ENCODE measurements at regions of chr5 and their contacts with region 1.

Region 1: GRCh38 chr5:139273572-139274289 is 19.8 kb upstream of the MATR3 start:
- DNase-seq: peak; percentile 99
- H3K27ac ChIP-seq: peak overlapping the region; percentile 72
- CTCF ChIP-seq: no peak

Region 2: DNA sequence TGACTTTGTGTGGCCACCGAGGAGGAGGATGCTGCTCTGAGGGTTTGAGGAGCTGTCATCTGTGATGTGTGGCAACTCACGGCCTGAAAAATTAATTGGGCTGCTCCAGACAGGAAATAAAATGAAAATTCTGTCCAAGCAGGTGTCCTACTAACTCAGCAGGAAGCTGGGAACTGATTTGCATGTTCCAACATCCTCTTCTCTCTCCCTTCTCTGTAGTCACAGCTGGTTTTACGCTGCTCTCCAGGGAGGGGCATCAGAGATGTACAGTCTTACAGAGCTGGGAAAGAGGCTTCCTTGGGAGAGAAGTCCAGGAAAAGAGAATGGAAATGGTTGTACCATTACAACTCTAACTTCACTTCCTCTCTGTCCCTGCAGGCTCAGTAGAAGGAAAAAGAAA is 51.4 kb before region 1 on chr5:
- CTCF ChIA-PET with region 1: no interaction called
- POLR2A ChIA-PET with region 1: no interaction called
- DNase-seq: no peak
- H3K27ac ChIP-seq: no peak overlapping the region
- CTCF ChIP-seq: no peak

Region 3: DNA sequence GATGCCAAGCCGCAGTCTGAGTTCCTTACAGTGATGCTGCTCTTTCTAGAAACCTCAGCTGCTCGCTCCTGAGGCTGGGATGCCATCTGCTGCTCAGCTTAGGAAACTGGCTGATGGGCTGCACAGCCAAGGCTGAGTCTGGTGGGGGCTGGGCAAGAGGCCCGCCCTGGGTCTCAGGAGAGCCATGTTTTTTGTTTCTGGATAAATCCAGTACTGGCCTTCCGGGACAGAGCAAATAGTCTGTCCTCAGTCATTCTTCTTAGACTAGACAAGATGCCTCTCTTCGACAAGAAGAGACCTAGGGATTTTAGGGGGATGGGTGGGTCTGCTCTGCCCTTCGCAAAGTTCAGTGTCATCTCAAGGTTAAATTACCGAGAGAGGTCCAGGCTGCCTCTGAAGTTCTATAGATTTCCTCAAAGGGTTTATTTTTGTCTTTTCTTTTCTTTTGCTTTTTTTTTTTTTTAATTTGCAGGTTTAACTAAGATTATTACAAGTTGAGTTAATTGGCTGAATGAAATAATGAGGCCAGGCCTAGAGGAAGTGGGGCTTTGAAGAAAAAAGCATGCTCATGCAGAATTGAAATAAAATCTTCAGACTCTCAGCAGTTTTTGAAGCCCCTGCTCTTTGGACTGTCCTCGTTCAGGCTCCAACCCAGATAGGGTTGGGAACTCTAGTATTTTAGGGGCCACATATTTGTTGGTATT is 10.8 kb before region 1 on chr5:
- CTCF ChIA-PET with region 1: interaction called, 11 read pairs
- POLR2A ChIA-PET with region 1: no interaction called
- DNase-seq: peak; percentile 96
- H3K27ac ChIP-seq: no peak overlapping the region
- CTCF ChIP-seq: peak; percentile 99

Measured in RWPE1 (cell line).